ENCODE measurements at regions of chr16 and their contacts with region 1.

Region 1: GRCh38 chr16:89442990-89443731 is 47.2 kb downstream of the ANKRD11 start:
- DNase-seq: no peak
- H3K4me3 Mint-ChIP-seq: no peak overlapping the region
- H3K27ac Mint-ChIP-seq: peak overlapping the region; percentile 10
- H3K4me1 Mint-ChIP-seq: peaks cover 93% of the 10 kb centered on the region
- H3K27me3 Mint-ChIP-seq: no peaks in the 10 kb centered on the region

Region 2: GRCh38 chr16:89409161-89409711 is 33.9 kb before region 1 on chr16:
- CTCF ChIA-PET with region 1: no interaction called
- POLR2A ChIA-PET with region 1: no interaction called
- intact Hi-C with region 1: loop called (anchors 5 kb)
- DNase-seq: peak; percentile 78
- H3K4me3 Mint-ChIP-seq: no peak overlapping the region
- H3K27ac Mint-ChIP-seq: peak overlapping the region; percentile 86
- H3K4me1 Mint-ChIP-seq: peaks cover 88% of the 10 kb centered on the region
- H3K27me3 Mint-ChIP-seq: no peaks in the 10 kb centered on the region

Measured in activated CD4-positive, alpha-beta memory T cell treated with anti-CD3 and anti-CD28 coated beads for 36 hours (primary cell).